ENCODE measurements at regions of chr15 and their contacts with region 1.

Region 1: GRCh38 chr15:32844118-32844711 is 126.4 kb downstream of the GREM1 start:
- DNase-seq: peak; percentile 36
- CTCF ChIP-seq: peak; percentile 66

Region 2: GRCh38 chr15:32651229-32651837 is 192.9 kb before region 1 on chr15:
- in situ Hi-C with region 1: loop called (anchors 25 kb)
- DNase-seq: peak; percentile 70
- CTCF ChIP-seq: peak; percentile 96

Region 3: DNA sequence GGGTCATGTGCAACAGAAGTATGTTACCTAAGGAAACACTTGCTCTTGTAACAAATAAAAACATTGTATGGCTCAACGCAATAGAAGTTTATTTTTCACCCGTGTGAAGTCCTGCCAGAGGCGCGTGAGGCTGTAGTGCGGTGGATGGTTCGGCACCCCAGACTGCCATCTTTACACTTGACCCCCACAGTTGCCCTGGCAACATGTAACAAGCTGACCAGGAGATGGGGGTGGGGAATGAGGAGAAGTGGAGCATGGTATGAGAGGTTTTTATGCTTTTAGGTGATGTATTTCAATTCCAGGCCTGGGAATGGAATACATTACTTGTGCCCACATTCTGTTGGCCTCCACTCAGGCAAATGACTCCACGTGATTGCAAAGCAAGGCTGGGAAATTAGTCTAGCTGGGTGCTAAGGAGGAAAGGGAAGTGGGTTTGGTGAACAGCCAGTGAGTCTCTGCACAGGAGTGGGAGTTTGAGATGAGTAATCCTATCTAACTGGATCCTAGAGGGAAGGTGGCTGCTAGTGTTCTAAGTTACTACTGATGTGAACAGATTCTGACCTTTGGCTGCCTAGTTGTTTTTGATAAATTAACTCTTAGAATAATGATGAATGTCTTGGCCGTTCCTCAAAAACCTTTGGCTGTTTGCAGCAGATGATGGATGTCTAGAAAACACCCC is 160.2 kb before region 1 on chr15:
- in situ Hi-C with region 1: no loop called
- DNase-seq: no peak
- CTCF ChIP-seq: no peak

Region 4: GRCh38 chr15:32994810-32995424 is 150.7 kb after region 1 on chr15:
- in situ Hi-C with region 1: loop called (anchors 10 kb)
- DNase-seq: no peak
- CTCF ChIP-seq: peak; percentile 40

Region 5: DNA sequence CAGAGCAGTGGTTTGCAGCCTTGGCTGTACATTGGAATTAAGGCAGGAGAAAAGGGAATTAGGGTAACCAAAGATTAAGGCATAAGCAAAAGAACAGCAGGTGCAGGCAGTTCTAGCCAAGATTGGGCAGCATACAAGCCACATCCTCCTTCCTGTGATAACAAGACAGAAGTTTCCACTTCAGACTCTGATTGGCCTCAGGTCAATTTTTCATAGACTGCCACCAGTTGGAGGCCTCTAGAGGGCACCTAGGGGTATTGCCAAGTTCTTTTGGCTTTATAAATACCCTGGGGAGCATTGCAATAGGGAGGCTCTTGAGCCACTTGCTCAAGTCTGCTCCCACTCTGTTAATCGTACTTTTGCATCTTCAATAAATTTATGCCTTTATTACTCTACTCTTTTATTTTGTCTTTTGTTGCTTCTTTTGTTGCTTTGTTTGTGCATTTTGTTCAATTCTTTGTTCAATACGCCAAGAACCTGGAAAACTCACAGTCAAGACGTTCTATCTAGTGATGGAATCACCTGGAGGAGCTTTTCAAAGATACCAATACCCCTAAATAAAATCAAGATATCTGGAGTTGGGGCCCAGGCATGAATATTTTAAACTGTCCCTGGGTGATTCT is 382.5 kb after region 1 on chr15:
- in situ Hi-C with region 1: no loop called
- DNase-seq: no peak
- CTCF ChIP-seq: peak; percentile 10

Measured in GM13977 (cell line).